Panc1 (cell line): ENCODE measurements at regions of chr1 and their contacts with region 1.

Region 1: DNA sequence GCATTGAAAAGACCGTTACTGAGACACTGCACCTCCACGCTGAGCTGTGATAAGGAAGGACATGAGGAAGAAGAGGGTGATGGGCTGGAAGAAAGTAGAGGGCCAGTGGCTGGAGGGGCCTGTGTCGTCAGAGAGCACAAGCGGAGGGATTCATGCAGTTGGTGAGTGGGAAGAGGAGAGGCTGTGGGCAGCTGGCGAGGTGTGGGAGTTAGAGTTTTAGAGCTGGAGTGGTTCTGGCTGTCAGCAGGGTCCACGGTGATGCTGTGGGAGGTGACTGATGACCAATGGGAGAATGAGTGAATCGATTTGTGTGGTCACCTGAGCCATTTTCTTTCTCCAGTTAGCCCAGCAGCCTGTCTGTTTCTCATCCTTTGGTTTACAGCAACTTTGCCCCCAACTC is 66.2 kb upstream of the SLC2A1 start:
- DNase-seq: no peak
- ATAC-seq: no peak
- H3K4me3 ChIP-seq: no peak overlapping the region
- H3K27ac ChIP-seq: no peak overlapping the region
- H3K4me1 ChIP-seq: no peaks in the 10 kb centered on the region
- H3K27me3 ChIP-seq: no peaks in the 10 kb centered on the region
- CTCF ChIP-seq: no peak

Region 2: DNA sequence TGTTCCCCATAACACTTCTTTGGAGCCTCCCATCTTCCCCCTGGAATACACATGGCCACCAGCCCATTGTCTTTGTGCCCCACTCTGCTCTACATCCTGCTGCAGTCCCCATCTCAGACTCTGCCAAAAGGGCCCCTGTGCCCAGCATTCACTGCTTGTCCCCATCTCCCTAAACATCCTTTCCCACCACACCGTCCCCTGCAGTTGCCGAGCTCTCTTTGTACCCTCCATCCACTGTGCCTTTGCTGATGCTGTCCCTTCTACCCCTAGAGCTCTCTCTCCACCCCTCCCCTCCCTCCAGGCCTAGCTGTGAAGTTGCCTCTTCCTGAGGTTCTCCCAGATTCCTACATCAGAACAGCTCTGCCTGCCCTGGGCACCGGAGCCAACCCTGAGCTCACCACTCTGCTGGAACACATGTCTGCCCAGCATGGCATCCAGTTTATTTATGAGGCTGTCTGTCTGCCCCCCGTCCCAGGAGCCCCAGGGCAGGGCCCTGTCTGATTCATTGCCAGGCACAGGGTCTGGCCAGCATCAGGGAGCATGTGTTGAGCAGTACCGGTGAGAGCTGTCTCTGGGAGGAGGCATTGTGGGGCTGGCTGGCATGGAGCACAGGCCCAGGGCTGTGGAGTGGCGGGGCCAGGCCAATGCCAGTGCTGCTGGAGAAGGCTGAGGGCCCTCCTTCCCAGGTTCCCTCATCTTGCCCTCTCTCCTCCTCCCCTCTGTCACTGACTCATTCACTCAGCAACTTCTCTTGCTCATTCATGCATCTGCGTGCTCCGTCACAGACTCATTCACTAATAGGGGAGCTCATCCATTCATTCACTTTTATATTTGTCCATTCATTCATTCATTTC is 1569.2 kb before region 1 on chr1:
- CTCF ChIA-PET with region 1: no interaction called
- POLR2A ChIA-PET with region 1: interaction called, 15 read pairs
- in situ Hi-C with region 1: no loop called
- intact Hi-C with region 1: no loop called
- DNase-seq: no peak
- ATAC-seq: no peak
- H3K4me3 ChIP-seq: no peak overlapping the region
- H3K27ac ChIP-seq: no peak overlapping the region
- H3K4me1 ChIP-seq: no peaks in the 10 kb centered on the region
- H3K27me3 ChIP-seq: no peaks in the 10 kb centered on the region
- CTCF ChIP-seq: no peak

Region 3: GRCh38 chr1:43002116-43002515 is 22.8 kb before region 1 on chr1:
- CTCF ChIA-PET with region 1: no interaction called
- POLR2A ChIA-PET with region 1: no interaction called
- in situ Hi-C with region 1: no loop called
- intact Hi-C with region 1: no loop called
- DNase-seq: no peak
- ATAC-seq: no peak
- H3K4me3 ChIP-seq: no peak overlapping the region
- H3K27ac ChIP-seq: no peak overlapping the region
- H3K4me1 ChIP-seq: no peaks in the 10 kb centered on the region
- H3K27me3 ChIP-seq: no peaks in the 10 kb centered on the region
- CTCF ChIP-seq: no peak